ENCODE measurements at regions of chr2 and their contacts with region 1.

Region 1: DNA sequence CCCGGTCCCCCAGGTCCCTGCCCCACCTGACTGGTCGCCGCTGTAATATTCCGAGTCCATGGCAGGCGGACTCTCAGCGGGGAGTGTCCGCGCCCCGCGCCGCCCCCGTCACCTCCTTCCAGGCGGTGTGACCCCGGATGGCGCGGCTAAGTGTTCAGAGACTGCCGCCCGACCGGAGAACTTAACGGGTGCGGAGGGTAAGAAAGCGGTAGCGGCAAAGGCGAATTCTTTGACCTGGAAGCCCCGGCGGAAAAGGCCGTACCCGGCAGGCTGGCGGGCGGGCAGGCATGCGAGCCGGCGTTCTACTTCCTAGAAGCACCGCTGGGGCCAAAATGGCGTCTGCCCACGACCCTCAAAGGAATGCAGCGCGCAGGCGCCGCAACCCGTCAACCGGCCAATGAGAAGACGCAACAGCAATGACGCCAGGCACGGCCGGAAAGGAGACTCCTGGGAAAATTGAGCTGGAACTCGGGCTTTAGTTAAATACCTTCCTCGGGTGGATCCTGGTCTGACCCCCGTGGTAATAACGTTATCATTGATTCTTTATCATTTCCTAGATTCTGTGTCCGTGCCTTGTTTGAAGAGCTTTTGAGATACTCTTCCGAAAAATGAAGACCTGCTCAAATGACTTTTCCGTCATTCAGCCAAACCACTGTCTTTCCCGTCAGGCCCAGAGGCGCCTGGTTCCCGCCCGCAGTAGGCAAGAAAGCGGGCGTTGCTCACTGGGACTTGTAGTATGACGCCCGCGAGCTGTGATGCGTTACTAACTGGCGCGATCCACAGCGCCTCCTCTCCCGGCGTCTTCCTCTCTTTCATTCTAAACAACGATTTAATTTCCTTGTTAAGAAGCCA is at the start of gene IWS1:
- DNase-seq: peak; percentile 90 to 98 (median 96)

Region 2: DNA sequence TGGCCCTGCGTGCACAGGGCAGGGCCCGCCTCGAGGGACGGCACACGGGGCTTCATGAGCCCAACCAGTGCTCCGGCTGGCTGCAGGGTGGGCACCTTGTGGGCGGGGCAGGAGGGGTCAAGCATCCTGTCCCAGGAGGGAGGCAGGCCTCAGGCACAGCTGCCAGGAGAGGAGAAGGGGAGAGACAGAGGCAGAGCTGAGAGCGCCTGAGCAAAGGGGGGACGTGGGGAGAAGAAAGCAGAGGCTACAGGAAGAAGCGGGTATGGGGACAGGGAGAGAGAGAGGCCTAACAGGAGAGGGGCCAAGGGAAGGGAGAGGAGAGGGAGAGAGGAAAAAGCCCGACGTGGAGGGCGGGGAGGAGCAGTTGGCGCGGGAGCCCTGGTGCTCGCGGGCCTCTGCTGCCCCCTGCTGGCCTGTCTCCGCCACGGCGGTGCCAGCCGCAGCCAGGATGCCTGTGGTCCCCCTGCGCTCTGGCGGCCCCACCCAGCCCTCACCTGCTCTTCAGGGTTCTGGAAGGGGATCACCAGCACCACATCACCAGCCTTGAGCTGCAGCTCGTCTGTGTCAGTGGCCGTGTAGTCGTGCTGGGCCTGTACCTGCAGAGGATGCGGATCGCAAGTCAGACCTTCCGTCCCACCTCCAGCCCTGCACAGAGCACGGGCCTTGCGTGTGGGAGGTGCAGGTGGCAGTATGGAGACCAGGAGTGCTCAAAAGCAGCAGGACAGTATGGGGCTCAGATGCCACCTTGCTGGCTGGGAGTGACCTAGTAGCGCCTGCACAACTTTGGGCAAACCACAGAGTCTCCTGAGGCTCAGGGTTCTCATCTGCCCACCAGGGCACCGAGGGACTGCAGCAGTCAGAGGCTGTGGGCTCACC is 476.2 kb before region 1 on chr2:
- intact Hi-C with region 1: no loop called
- DNase-seq: peak; percentile 56 to 92 (median 80)

Region 3: GRCh38 chr2:127649684-127650040 is 123.3 kb after region 1 on chr2:
- intact Hi-C with region 1: loop called (anchors 10 kb)
- DNase-seq: peak; percentile 38 to 96 (median 88)

Region 4: DNA sequence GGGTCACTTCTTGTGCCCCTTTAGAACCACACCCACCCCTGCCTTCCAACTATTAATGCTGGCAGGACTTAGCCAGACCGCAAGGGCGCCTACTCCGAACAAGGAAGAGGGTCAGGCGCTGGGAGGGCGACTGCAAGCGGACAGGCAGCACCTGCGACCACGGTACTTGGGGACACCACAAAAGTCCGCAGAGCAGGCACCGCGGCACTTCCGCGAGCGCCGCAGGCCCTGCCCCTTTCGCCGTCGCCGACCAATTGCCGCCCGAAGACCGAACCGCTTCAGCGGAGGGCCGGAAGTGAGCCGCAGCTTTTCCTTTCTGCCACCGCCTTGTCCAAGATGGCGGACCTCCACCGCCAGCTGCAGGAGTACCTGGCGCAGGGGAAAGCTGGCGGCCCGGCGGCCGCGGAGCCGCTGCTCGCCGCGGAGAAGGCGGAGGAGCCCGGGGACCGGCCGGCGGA is 174.8 kb after region 1 on chr2 and contains the start of gene SFT2D3:
- intact Hi-C with region 1: loop called (anchors 5 kb)
- DNase-seq: peak; percentile 79 to 96 (median 93)